Activated CD4-positive, alpha-beta T cell treated with anti-CD3 and anti-CD28 coated beads, Interleukin-2, amount 10 ng/mL, durations not matched to agents 24 days and 14 days (primary cell): ENCODE measurements at regions of chr1 and their contacts with region 1.

Region 1: GRCh38 chr1:66242646-66243547 is 291.1 kb upstream of the SGIP1 start:
- DNase-seq: peak; percentile 93
- H3K4me3 Mint-ChIP-seq: no peak overlapping the region
- H3K27ac Mint-ChIP-seq: no peak overlapping the region
- H3K4me1 Mint-ChIP-seq: peaks cover 25% of the 10 kb centered on the region
- H3K27me3 Mint-ChIP-seq: peaks cover 6% of the 10 kb centered on the region

Region 2: GRCh38 chr1:65393347-65393746 is 849.5 kb before region 1 on chr1:
- intact Hi-C with region 1: loop called (anchors 10 kb)
- DNase-seq: peak; percentile 81
- H3K4me3 Mint-ChIP-seq: peak overlapping the region; percentile 38
- H3K27ac Mint-ChIP-seq: peak overlapping the region; percentile 54
- H3K4me1 Mint-ChIP-seq: peaks cover 72% of the 10 kb centered on the region
- H3K27me3 Mint-ChIP-seq: no peaks in the 10 kb centered on the region

Region 3: GRCh38 chr1:65717815-65718454 is 525.0 kb before region 1 on chr1:
- intact Hi-C with region 1: loop called (anchors 2 kb)
- DNase-seq: peak; percentile 62
- H3K4me3 Mint-ChIP-seq: no peak overlapping the region
- H3K27ac Mint-ChIP-seq: no peak overlapping the region
- H3K4me1 Mint-ChIP-seq: no peaks in the 10 kb centered on the region
- H3K27me3 Mint-ChIP-seq: peaks cover 30% of the 10 kb centered on the region

Region 4: GRCh38 chr1:66137235-66137634 is 105.7 kb before region 1 on chr1:
- intact Hi-C with region 1: loop called (anchors 5 kb)
- DNase-seq: no peak
- H3K4me3 Mint-ChIP-seq: no peak overlapping the region
- H3K27ac Mint-ChIP-seq: no peak overlapping the region
- H3K4me1 Mint-ChIP-seq: peaks cover 3% of the 10 kb centered on the region
- H3K27me3 Mint-ChIP-seq: peaks cover 5% of the 10 kb centered on the region

Region 5: DNA sequence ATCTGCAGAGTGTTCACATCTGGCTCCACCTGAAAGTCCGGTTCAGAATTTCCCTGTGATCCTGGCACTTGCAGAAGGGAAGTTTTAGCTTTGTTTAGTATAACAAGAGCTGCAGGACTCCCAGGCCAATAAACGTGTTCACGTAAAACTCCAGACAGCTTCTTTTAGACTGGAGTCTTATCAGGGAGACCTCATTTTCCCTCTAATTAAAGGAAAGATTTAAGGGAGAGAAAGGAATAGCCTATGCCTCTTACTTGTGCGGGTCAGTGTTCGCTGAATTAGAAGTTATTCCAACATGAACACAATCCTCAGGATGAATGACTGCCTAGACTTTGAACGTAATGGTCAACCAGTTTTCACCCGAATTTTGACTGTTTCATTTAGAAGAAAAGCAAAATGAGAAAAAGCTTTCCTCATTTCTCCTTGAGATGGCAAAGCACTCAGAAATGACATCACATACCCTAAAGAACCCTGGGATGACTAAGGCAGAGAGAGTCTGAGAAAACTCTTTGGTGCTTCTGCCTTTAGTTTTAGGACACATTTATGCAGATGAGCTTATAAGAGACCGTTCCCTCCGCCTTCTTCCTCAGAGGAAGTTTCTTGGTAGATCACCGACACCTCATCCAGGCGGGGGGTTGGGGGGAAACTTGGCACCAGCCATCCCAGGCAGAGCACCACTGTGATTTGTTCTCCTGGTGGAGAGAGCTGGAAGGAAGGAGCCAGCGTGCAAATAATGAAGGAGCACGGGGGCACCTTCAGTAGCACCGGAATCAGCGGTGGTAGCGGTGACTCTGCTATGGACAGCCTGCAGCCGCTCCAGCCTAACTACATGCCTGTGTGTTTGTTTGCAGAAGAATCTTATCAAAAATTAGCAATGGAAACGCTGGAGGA is 89.0 kb after region 1 on chr1:
- intact Hi-C with region 1: loop called (anchors 1 kb)
- DNase-seq: peak; percentile 82
- H3K4me3 Mint-ChIP-seq: peak overlapping the region; percentile 98
- H3K27ac Mint-ChIP-seq: peak overlapping the region; percentile 97
- H3K4me1 Mint-ChIP-seq: peaks cover 56% of the 10 kb centered on the region
- H3K27me3 Mint-ChIP-seq: no peaks in the 10 kb centered on the region

Region 6: DNA sequence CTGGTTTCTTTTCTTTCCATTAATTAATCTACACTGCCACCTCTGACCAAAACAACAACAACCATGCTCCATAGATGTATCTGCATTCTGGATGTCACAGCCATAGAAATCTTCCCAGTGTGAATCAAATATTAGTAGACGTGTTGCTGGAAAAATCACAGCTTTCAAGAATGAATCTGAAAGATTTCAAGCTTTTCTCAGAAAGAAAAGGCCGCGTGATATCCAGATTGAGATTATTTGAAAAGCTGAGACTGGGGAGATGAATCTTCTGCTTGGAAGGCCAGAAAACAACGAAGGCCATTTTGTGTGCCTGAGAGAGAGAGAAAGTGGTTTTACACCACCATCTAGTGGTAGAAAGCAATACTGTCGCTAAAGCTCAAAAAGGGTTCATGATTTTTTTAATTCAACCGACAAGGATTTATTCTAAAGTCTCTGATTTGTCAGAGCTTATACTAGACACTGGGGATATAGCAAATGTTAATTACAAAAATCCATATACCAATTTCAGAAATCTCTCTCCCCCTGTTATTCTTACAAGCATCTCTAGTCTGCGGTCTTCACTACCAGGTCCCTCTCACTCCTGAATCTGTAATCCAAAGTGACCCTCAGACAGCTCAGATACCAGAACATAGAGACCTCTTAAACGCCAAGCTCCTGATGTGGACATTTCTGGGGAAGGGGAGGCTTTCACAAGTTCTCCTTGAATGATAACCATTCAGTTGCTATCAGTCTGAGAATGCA is 203.5 kb after region 1 on chr1:
- intact Hi-C with region 1: loop called (anchors 1 kb)
- DNase-seq: peak; percentile 87
- H3K4me3 Mint-ChIP-seq: peak overlapping the region; percentile 77
- H3K27ac Mint-ChIP-seq: peak overlapping the region; percentile 93
- H3K4me1 Mint-ChIP-seq: peaks cover 30% of the 10 kb centered on the region
- H3K27me3 Mint-ChIP-seq: peaks cover 22% of the 10 kb centered on the region